Activated CD8-positive, alpha-beta T cell treated with anti-CD3 and anti-CD28 coated beads for 36 hours (primary cell): ENCODE measurements at regions of chr9 and their contacts with region 1.

Region 1: GRCh38 chr9:36190388-36191287 is at the start of gene CLTA:
- DNase-seq: peak; percentile 97
- ATAC-seq: peak; percentile 99
- H3K4me3 Mint-ChIP-seq: peak within 1 kb of the TSS; percentile 94
- H3K27ac Mint-ChIP-seq: peak within 1 kb of the TSS; percentile 90
- H3K4me1 Mint-ChIP-seq: peaks cover 40% of the 10 kb centered on the region
- H3K27me3 Mint-ChIP-seq: no peaks in the 10 kb centered on the region
- CTCF ChIP-seq: peak; percentile 52
- total RNA-seq, gene CLTA: 116 to 119 TPM

Region 2: DNA sequence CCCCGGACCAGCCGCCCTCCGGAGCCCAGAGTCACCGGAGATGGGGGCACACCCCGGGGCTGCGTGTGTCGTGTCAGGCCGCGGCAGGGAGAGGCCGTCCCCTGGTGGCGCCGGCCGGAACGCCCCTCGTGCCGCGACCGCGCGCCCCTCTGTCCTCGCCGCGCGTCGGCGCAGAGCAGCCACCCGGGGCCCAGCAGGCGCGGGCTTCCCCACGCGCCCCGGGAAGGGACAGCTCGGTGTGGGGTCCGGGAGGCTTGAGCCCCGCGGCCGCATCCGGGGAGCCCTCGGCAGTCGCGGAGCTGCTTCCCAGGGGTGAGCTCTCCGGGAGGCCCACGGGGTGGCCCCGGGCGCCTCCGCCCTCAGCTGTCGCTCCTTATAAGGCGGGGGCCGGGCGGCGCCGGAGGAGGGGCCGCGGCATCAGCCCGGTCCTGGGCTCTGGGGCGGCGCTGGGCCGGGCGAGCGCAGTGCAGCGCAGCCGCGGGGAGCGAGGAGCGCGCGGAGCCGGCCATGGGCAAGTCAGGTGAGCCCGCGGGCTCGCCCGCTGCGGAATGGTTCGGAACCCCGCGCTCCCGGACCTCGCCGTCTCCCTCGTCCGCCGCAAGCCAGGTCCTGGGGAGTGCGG is 54.3 kb before region 1 on chr9 and contains the start of gene GLIPR2:
- CTCF ChIA-PET with region 1: no interaction called
- POLR2A ChIA-PET with region 1: interaction called, 12 read pairs
- intact Hi-C with region 1: no loop called
- DNase-seq: peak; percentile 82
- ATAC-seq: peak; percentile 96
- H3K4me3 Mint-ChIP-seq: peak within 1 kb of the TSS; percentile 85
- H3K27ac Mint-ChIP-seq: peak within 1 kb of the TSS; percentile 68
- H3K4me1 Mint-ChIP-seq: peaks cover 43% of the 10 kb centered on the region
- H3K27me3 Mint-ChIP-seq: no peaks in the 10 kb centered on the region
- CTCF ChIP-seq: peak; percentile 33
- total RNA-seq, gene GLIPR2: 12.2 to 13.6 TPM

Region 3: GRCh38 chr9:36148311-36149051 is 42.2 kb before region 1 on chr9:
- CTCF ChIA-PET with region 1: interaction called, 5 read pairs
- POLR2A ChIA-PET with region 1: interaction called, 23 read pairs
- intact Hi-C with region 1: no loop called
- DNase-seq: peak; percentile 92
- ATAC-seq: peak; percentile 32
- H3K4me3 Mint-ChIP-seq: no peak overlapping the region
- H3K27ac Mint-ChIP-seq: peak overlapping the region; percentile 4
- H3K4me1 Mint-ChIP-seq: peaks cover 88% of the 10 kb centered on the region
- H3K27me3 Mint-ChIP-seq: no peaks in the 10 kb centered on the region
- CTCF ChIP-seq: no peak

Region 4: GRCh38 chr9:36204906-36205547 is 14.4 kb after region 1 on chr9:
- CTCF ChIA-PET with region 1: interaction called, 18 read pairs
- POLR2A ChIA-PET with region 1: interaction called, 17 read pairs
- intact Hi-C with region 1: no loop called
- DNase-seq: no peak
- ATAC-seq: no peak
- H3K4me3 Mint-ChIP-seq: no peak overlapping the region
- H3K27ac Mint-ChIP-seq: no peak overlapping the region
- H3K4me1 Mint-ChIP-seq: peaks cover 38% of the 10 kb centered on the region
- H3K27me3 Mint-ChIP-seq: no peaks in the 10 kb centered on the region
- CTCF ChIP-seq: no peak

Region 5: DNA sequence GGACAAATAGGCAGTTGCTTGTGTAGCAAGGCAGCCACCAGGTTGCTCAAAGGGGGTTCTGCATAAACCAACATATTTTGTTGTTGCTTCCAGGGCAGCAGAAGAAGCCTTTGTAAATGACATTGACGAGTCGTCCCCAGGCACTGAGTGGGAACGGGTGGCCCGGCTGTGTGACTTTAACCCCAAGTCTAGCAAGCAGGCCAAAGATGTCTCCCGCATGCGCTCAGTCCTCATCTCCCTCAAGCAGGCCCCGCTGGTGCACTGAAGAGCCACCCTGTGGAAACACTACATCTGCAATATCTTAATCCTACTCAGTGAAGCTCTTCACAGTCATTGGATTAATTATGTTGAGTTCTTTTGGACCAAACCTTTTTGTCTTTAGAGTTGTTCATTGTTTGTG is 20.9 kb after region 1 on chr9:
- CTCF ChIA-PET with region 1: interaction called, 18 read pairs
- POLR2A ChIA-PET with region 1: interaction called, 7 read pairs
- intact Hi-C with region 1: no loop called
- DNase-seq: no peak
- ATAC-seq: no peak
- H3K4me3 Mint-ChIP-seq: no peak overlapping the region
- H3K27ac Mint-ChIP-seq: peak overlapping the region; percentile 33
- H3K4me1 Mint-ChIP-seq: peaks cover 62% of the 10 kb centered on the region
- H3K27me3 Mint-ChIP-seq: no peaks in the 10 kb centered on the region
- CTCF ChIP-seq: no peak

Region 6: GRCh38 chr9:36328798-36329411 is 138.3 kb after region 1 on chr9:
- CTCF ChIA-PET with region 1: interaction called, 24 read pairs
- POLR2A ChIA-PET with region 1: interaction called, 5 read pairs
- intact Hi-C with region 1: no loop called
- DNase-seq: peak; percentile 67
- ATAC-seq: peak; percentile 85
- H3K4me3 Mint-ChIP-seq: no peak overlapping the region
- H3K27ac Mint-ChIP-seq: no peak overlapping the region
- H3K4me1 Mint-ChIP-seq: peaks cover 2% of the 10 kb centered on the region
- H3K27me3 Mint-ChIP-seq: no peaks in the 10 kb centered on the region
- CTCF ChIP-seq: peak; percentile 86